Breast epithelium (tissue), 4 donors: ENCODE measurements at regions of chrX and their contacts with region 1.

Region 1: DNA sequence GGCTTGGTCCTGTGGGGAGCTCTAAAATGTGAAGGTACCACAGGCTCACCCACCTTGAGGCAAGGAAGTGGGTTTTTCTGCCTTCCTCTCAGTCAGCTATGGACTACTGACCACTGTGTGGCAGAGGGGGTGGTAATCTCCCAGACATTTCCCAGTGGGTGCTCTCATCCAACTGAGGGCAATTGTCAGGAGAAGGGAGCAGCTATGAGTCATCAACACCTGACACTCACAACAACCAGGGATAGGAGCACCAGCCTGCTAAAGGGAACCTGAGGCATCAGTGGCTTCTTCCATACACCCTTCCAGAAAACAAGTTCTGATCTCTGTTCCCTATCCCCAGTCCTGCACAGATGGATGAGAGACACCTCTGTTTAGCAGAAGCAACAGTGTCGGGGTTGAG is 468.8 kb downstream of the BCOR start:
- DNase-seq: no peak
- H3K4me3 ChIP-seq: no peak overlapping the region
- H3K27ac ChIP-seq: no peak overlapping the region
- H3K4me1 ChIP-seq: no peaks in the 10 kb centered on the region
- H3K27me3 ChIP-seq: peaks cover 0 to 59% of the 10 kb centered on the region in 2 donors
- CTCF ChIP-seq: no peak
- POLR2A ChIP-seq: no peak

Region 2: DNA sequence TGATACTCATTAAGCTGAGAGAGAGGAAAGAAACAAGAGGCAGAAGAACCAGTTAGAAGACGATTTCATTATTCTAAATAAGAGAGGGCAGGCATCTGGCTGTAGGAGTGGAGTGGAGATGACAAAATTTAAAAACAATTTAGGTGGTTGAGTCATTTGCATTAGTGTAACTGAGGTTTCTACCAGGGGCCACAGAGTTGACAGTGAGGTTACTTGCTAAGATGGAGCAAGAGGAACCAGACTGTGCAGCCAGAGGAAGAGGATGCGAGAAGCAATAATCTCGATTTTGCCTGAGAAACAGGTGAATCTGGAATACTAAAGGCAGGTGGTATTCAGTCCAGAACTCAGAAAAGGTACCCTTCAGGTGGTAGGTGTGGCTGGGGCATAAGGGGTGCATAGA is 335.8 kb before region 1 on chrX:
- intact Hi-C with region 1: no loop called
- DNase-seq: no peak
- H3K4me3 ChIP-seq: no peak overlapping the region
- H3K27ac ChIP-seq: no peak overlapping the region
- H3K4me1 ChIP-seq: no peaks in the 10 kb centered on the region
- H3K27me3 ChIP-seq: peaks cover 0 to 72% of the 10 kb centered on the region in 2 donors
- CTCF ChIP-seq: no peak
- POLR2A ChIP-seq: no peak

Region 3: DNA sequence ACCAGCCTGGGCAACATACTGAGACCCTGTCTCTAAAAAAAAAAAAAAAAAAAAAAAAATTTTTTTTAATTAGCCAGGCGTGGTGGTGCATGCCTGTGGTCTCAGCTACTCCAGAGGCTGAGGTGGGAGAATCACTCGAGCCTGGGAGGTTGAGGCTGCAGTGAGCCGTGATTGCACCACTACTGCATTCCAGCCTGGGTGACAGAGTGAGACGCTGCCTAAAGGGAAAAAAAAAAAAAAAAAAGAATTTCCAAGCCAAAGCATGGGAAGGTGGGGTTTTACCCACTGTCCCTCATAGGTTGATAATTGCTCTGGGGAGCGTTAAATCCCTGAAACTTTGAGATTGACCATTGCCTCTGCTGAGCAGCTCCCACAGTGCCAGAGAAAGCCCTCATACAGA is 41.3 kb after region 1 on chrX:
- intact Hi-C with region 1: loop called (anchors 2 kb)
- DNase-seq: no peak
- H3K4me3 ChIP-seq: no peak overlapping the region
- H3K27ac ChIP-seq: no peak overlapping the region
- H3K4me1 ChIP-seq: no peaks in the 10 kb centered on the region
- H3K27me3 ChIP-seq: peaks cover 0 to 67% of the 10 kb centered on the region in 2 donors
- CTCF ChIP-seq: no peak
- POLR2A ChIP-seq: no peak

Region 4: GRCh38 chrX:39896951-39897740 is 268.1 kb after region 1 on chrX:
- intact Hi-C with region 1: no loop called
- DNase-seq: peak in 1 of 2 donors; percentile 78
- H3K4me3 ChIP-seq: no peak overlapping the region
- H3K27ac ChIP-seq: peak overlapping the region; percentile 49 to 55
- H3K4me1 ChIP-seq: peaks cover 0 to 6% of the 10 kb centered on the region in 2 donors
- H3K27me3 ChIP-seq: peaks cover 0 to 48% of the 10 kb centered on the region in 2 donors
- CTCF ChIP-seq: no peak
- POLR2A ChIP-seq: no peak